Esophagus squamous epithelium (tissue), 5 donors: ENCODE measurements at regions of chr9 and their contacts with region 1.

Region 1: GRCh38 chr9:93003552-93004407 is 54.7 kb upstream of the SUSD3 start:
- DNase-seq: no peak
- H3K4me3 ChIP-seq: peak overlapping the region in 2 of 4 donors; percentile 16
- H3K27ac ChIP-seq: no peak overlapping the region
- H3K4me1 ChIP-seq: peaks cover 0 to 13% (median 0%) of the 10 kb centered on the region in 3 donors
- H3K27me3 ChIP-seq: no peaks in the 10 kb centered on the region
- CTCF ChIP-seq: peak; percentile 58 to 78 (median 65)
- POLR2A ChIP-seq: no peak

Region 2: DNA sequence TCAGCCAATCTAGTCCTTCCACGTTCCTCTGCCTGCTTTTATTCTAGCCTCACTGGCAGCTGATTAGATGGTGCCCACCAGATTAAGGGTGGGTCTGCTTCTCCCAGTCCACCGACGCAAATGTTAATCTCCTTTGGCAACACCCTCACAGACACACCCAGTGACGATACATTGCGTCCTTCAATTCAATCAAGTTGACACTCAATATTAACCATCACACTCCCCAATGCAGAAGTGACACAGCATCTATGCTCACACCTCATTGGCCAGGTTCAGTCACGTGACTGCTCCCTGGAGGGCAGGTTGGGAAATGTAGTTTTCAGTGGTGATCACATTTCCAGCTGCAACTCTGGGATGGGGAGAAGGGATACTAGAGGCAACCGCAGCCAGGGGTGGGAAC is 67.7 kb after region 1 on chr9:
- intact Hi-C with region 1: no loop called
- DNase-seq: no peak
- H3K4me3 ChIP-seq: no peak overlapping the region
- H3K27ac ChIP-seq: peak overlapping the region in 1 of 4 donors; percentile 18
- H3K4me1 ChIP-seq: peaks cover 0 to 19% (median 0%) of the 10 kb centered on the region in 3 donors
- H3K27me3 ChIP-seq: no peaks in the 10 kb centered on the region
- CTCF ChIP-seq: no peak
- POLR2A ChIP-seq: no peak

Region 3: GRCh38 chr9:93119953-93120845 is 116.4 kb after region 1 on chr9:
- intact Hi-C with region 1: loop called (anchors 10 kb)
- DNase-seq: peak; percentile 65
- H3K4me3 ChIP-seq: no peak overlapping the region
- H3K27ac ChIP-seq: peak overlapping the region; percentile 12 to 81 (median 62)
- H3K4me1 ChIP-seq: peaks cover 12 to 45% (median 20%) of the 10 kb centered on the region in 3 donors
- H3K27me3 ChIP-seq: no peaks in the 10 kb centered on the region
- CTCF ChIP-seq: peak in 4 of 6 experiments; percentile 23 to 52 (median 51)
- POLR2A ChIP-seq: no peak